ENCODE measurements at regions of chr20 and their contacts with region 1.

Region 1: GRCh38 chr20:41173161-41173721 is 35.9 kb downstream of the PLCG1 start:
- DNase-seq: peak; percentile 82 to 93
- H3K4me3 ChIP-seq: no peak overlapping the region
- H3K27ac ChIP-seq: peak overlapping the region; percentile 5 to 84 (median 69)
- H3K4me1 ChIP-seq: peaks cover 16 to 65% (median 49%) of the 10 kb centered on the region in 4 donors
- H3K27me3 ChIP-seq: no peaks in the 10 kb centered on the region
- CTCF ChIP-seq: peak in 6 of 7 experiments; percentile 39 to 95 (median 92)
- EP300 ChIP-seq: no peak
- POLR2A ChIP-seq: no peak

Region 2: GRCh38 chr20:41228858-41229630 is 55.8 kb after region 1 on chr20:
- intact Hi-C with region 1: loop called (anchors 10 kb)
- DNase-seq: no peak
- H3K4me3 ChIP-seq: no peak overlapping the region
- H3K27ac ChIP-seq: no peak overlapping the region
- H3K4me1 ChIP-seq: peaks cover 14 to 35% (median 24%) of the 10 kb centered on the region in 4 donors
- H3K27me3 ChIP-seq: no peaks in the 10 kb centered on the region
- CTCF ChIP-seq: no peak
- EP300 ChIP-seq: no peak
- POLR2A ChIP-seq: no peak

Region 3: DNA sequence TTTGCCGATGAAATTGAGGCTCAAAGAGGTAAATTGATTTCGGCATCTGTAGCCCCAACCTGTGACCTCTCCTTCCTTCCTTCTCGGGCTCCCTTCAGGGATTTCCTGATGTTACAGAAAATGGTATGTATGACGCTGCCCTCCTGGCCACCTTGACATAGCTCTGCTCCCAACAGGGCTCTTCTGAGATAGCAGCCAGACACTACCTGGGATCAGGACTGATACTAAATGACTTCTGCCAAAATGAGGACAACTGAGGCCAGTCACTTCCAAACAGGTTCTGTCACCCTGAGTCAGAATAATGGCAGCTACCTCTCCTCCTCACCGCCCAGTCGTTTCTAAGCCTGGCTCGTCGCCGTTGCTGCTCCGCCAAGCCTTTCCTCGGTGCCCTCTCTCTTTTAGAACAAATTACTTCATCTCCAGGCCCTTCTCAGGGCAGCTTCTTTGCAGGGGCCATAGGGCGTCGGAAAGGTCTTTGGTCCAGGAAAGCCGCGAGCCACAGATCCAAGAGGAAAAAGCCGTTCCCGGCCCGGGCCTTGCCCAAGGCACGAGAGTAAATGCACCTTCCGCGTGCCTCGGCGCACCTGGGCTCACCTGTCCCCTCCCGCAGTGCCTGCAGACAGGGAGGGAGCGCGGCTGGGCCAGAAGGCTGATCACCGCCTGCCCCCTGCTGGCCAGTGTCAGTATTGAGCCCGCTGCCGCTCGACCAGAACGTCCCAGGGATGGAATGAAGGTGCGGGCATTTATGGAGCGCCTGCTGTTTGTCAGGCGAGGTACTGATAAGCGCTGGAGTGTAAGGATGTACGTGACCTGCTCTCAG is 166.5 kb after region 1 on chr20:
- intact Hi-C with region 1: loop called (anchors 5 kb)
- DNase-seq: peak; percentile 95 to 96
- H3K4me3 ChIP-seq: peak overlapping the region; percentile 37 to 52 (median 38)
- H3K27ac ChIP-seq: peak overlapping the region; percentile 79 to 90 (median 88)
- H3K4me1 ChIP-seq: peaks cover 14 to 44% (median 31%) of the 10 kb centered on the region in 4 donors
- H3K27me3 ChIP-seq: no peaks in the 10 kb centered on the region
- CTCF ChIP-seq: peak in 6 of 7 experiments; percentile 90 to 100 (median 98)
- EP300 ChIP-seq: no peak
- POLR2A ChIP-seq: no peak